ENCODE measurements at regions of chr22 and their contacts with region 1.

Region 1: GRCh38 chr22:35140879-35141745 is 75.2 kb downstream of the ISX start:
- DNase-seq: no peak
- ATAC-seq: no peak
- H3K4me3 ChIP-seq: no peak overlapping the region
- H3K27ac ChIP-seq: no peak overlapping the region
- H3K4me1 ChIP-seq: no peaks in the 10 kb centered on the region
- H3K27me3 ChIP-seq: no peaks in the 10 kb centered on the region
- CTCF ChIP-seq: peak; percentile 35

Region 2: GRCh38 chr22:35043252-35043931 is 97.7 kb before region 1 on chr22:
- CTCF ChIA-PET with region 1: no interaction called
- POLR2A ChIA-PET with region 1: no interaction called
- in situ Hi-C with region 1: no loop called
- intact Hi-C with region 1: loop called (anchors 10 kb)
- DNase-seq: no peak
- ATAC-seq: no peak
- H3K4me3 ChIP-seq: no peak overlapping the region
- H3K27ac ChIP-seq: no peak overlapping the region
- H3K4me1 ChIP-seq: no peaks in the 10 kb centered on the region
- H3K27me3 ChIP-seq: no peaks in the 10 kb centered on the region; the same call in 1 of the 2 replicates
- CTCF ChIP-seq: no peak

Region 3: DNA sequence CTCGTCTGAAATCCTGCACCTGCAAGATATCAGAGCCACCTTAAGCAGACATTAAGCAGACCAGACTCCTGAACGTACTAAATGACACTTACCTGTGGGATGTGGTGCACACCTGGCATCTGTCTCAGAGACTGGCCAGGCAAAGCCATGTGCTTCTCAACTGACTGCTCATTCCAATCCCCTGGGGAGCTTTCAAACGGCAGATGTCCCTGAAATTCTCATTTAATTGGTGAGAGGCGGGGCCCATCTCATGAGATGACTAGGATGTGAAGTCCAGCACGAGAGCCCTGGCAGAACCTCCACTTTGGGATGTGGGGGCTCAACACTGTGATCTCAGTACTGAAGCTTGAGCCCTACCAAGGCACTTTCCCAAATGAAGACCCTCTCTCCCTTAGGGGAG is 31.3 kb after region 1 on chr22:
- CTCF ChIA-PET with region 1: no interaction called
- POLR2A ChIA-PET with region 1: no interaction called
- in situ Hi-C with region 1: no loop called
- intact Hi-C with region 1: no loop called
- DNase-seq: no peak
- ATAC-seq: no peak
- H3K4me3 ChIP-seq: no peak overlapping the region
- H3K27ac ChIP-seq: no peak overlapping the region
- H3K4me1 ChIP-seq: no peaks in the 10 kb centered on the region
- H3K27me3 ChIP-seq: no peaks in the 10 kb centered on the region
- CTCF ChIP-seq: no peak

Measured in Panc1 (cell line).